ENCODE measurements at regions of chr10 and their contacts with region 1.

Region 1: DNA sequence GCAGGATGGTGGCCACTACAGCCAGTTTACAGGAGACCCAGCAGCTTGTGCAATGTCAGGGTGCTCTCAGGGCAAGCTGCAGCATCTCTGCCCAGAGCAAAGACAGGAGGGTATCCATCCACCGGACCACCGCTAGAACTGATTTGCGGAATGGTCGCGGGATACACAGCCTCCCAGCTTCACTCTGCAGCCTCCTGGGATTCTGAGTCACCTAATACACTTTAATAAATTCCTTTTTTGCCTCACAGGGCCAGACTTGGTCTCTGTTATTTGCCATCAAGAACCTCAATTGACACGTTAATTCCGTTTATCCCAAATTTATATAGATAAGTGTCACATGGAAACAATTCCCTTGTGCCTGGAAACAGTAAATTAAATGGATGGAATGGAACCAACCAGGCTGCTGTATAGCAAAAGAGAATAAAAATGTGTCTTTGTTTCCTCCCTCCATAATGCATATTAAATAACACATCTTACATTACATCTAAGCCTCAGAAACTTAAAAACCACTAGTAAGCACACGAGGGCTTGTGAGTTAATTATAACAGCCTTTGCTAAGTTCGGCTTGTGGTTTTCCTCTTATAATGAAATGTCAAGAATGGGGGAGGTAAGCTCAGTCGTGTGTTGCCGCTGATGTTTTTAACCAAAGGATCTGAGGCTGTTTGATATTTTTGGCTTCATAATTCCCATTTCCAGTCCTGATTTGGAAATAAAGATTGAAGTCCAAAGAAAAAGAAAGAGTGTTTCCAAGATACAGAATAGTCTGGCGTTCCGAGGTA is 52.1 kb downstream of the ADRB1 start:
- DNase-seq: no peak
- ATAC-seq: no peak
- H3K4me3 ChIP-seq: no peak overlapping the region
- H3K27ac ChIP-seq: no peak overlapping the region
- H3K4me1 ChIP-seq: peaks cover 3% of the 10 kb centered on the region
- H3K27me3 ChIP-seq: no peaks in the 10 kb centered on the region
- CTCF ChIP-seq: no peak
- POLR2A ChIP-seq: no peak

Region 2: GRCh38 chr10:113808168-113808567 is 287.6 kb before region 1 on chr10:
- intact Hi-C with region 1: loop called (anchors 5 kb)
- DNase-seq: no peak
- ATAC-seq: no peak
- H3K4me3 ChIP-seq: no peak overlapping the region
- H3K27ac ChIP-seq: no peak overlapping the region
- H3K4me1 ChIP-seq: no peaks in the 10 kb centered on the region
- H3K27me3 ChIP-seq: no peaks in the 10 kb centered on the region
- CTCF ChIP-seq: no peak
- POLR2A ChIP-seq: no peak

Measured in body of pancreas (tissue), 4 donors.